H1 (cell line): ENCODE measurements at regions of chr18 and their contacts with region 1.

Region 1: GRCh38 chr18:31101183-31102024 is 817 bp downstream of the DSC2 start:
- DNase-seq: peak in 1 of 2 experiments; percentile 87
- H3K4me3 ChIP-seq: peak overlapping the region; percentile 76 to 97 (median 84)
- H3K27ac ChIP-seq: peak overlapping the region; percentile 90
- H3K4me1 ChIP-seq: peaks cover 0 to 10% (median 6%) of the 10 kb centered on the region in 4 experiments; a peak in 5 of 7 replicates
- H3K27me3 ChIP-seq: no peaks in the 10 kb centered on the region
- CTCF ChIP-seq: peak in 2 of 3 experiments; percentile 16 to 23; a peak in 2 of 4 replicates
- EP300 ChIP-seq: no peak
- POLR2A ChIP-seq: peak; percentile 67 to 70
- RAD21 ChIP-seq: no peak; a peak in 1 of 4 replicates

Region 2: GRCh38 chr18:31042437-31043181 is 58.8 kb before region 1 on chr18 and contains the start of gene DSC3:
- CTCF ChIA-PET with region 1: interaction called, 4 read pairs
- POLR2A ChIA-PET with region 1: interaction called, 11 read pairs
- DNase-seq: peak in 1 of 2 experiments; percentile 78
- H3K4me3 ChIP-seq: peak within 1 kb of the TSS; percentile 56 to 71 (median 62)
- H3K27ac ChIP-seq: no peak within 1 kb of the TSS
- H3K4me1 ChIP-seq: peaks cover 3 to 13% (median 7%) of the 10 kb centered on the region in 4 experiments; a peak in 5 of 7 replicates
- H3K27me3 ChIP-seq: peaks cover 25 to 60% (median 46%) of the 10 kb centered on the region in 4 experiments
- CTCF ChIP-seq: no peak
- EP300 ChIP-seq: no peak
- POLR2A ChIP-seq: peak; percentile 40 to 79
- RAD21 ChIP-seq: 0 out of 4 replicates have a peak, but pooled peaks of 1 of the 2 experiments have one; percentile 3
- total RNA-seq, gene DSC3: 3.3 and 3.7 TPM in 2 replicates

Region 3: GRCh38 chr18:31112804-31113203 is 11.4 kb after region 1 on chr18:
- CTCF ChIA-PET with region 1: interaction called, 3 read pairs
- POLR2A ChIA-PET with region 1: interaction called, 13 read pairs
- DNase-seq: no peak
- H3K4me3 ChIP-seq: no peak overlapping the region
- H3K27ac ChIP-seq: no peak overlapping the region
- H3K4me1 ChIP-seq: no peaks in the 10 kb centered on the region
- H3K27me3 ChIP-seq: no peaks in the 10 kb centered on the region
- CTCF ChIP-seq: no peak
- EP300 ChIP-seq: no peak
- POLR2A ChIP-seq: no peak
- RAD21 ChIP-seq: no peak

Region 4: DNA sequence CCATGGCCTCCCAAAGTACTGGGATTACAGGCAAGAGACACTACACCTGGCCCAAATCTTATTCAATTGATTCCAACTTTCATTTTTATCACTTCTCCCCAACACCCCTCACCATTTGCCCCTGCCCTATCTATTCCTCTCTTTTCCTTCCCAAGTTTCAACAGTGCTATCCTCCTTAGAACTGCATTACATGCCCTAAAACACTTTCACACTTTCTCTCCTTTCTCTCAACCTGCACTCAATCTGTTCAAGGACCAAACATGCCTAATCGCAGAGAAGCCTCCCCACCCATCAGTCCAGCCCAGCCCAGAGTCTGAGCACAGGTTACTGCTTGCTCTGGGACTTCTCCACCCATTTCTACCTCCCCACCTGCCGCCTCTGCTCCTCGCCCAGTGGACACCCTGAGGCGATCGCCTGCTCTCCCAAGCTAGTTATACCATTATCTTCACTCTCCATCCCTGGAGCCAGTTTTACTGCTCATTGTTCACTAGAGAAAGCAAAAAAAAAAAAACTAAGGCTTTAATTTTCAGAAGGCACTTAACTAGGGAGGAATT is 192.9 kb after region 1 on chr18:
- CTCF ChIA-PET with region 1: no interaction called
- POLR2A ChIA-PET with region 1: no interaction called
- DNase-seq: no peak
- H3K4me3 ChIP-seq: no peak overlapping the region
- H3K27ac ChIP-seq: no peak overlapping the region
- H3K4me1 ChIP-seq: no peaks in the 10 kb centered on the region
- H3K27me3 ChIP-seq: no peaks in the 10 kb centered on the region
- CTCF ChIP-seq: no peak
- EP300 ChIP-seq: no peak
- POLR2A ChIP-seq: no peak
- RAD21 ChIP-seq: no peak